Activated CD4-positive, alpha-beta T cell treated with anti-CD3 and anti-CD28 coated beads for 36 hours (primary cell): ENCODE measurements at regions of chr1 and their contacts with region 1.

Region 1: GRCh38 chr1:35030756-35031446 is 844 bp downstream of the ZMYM6 start:
- DNase-seq: peak; percentile 63
- ATAC-seq: peak; percentile 70
- H3K4me3 Mint-ChIP-seq: peak overlapping the region; percentile 92
- H3K27ac Mint-ChIP-seq: peak overlapping the region; percentile 92
- H3K4me1 Mint-ChIP-seq: peaks cover 33% of the 10 kb centered on the region
- H3K27me3 Mint-ChIP-seq: no peaks in the 10 kb centered on the region

Region 2: GRCh38 chr1:33430692-33431593 is 1600.0 kb before region 1 on chr1 and contains the start of gene PHC2:
- CTCF ChIA-PET with region 1: no interaction called
- POLR2A ChIA-PET with region 1: no interaction called
- intact Hi-C with region 1: loop called in 1 of 2 experiments (anchors 5 kb)
- DNase-seq: peak; percentile 95
- ATAC-seq: peak; percentile 99
- H3K4me3 Mint-ChIP-seq: peak within 1 kb of the TSS; percentile 58
- H3K27ac Mint-ChIP-seq: no peak within 1 kb of the TSS
- H3K4me1 Mint-ChIP-seq: peaks cover 5% of the 10 kb centered on the region
- H3K27me3 Mint-ChIP-seq: peaks cover 5% of the 10 kb centered on the region
- total RNA-seq, gene PHC2: 23.8 to 28.4 TPM

Region 3: GRCh38 chr1:34984793-34985608 is 45.9 kb before region 1 on chr1 and contains the start of gene TMEM35B:
- CTCF ChIA-PET with region 1: interaction called, 3 read pairs
- POLR2A ChIA-PET with region 1: interaction called, 3 read pairs
- intact Hi-C with region 1: loop called (anchors 1 to 5 kb)
- DNase-seq: peak; percentile 88
- ATAC-seq: peak; percentile 94
- H3K4me3 Mint-ChIP-seq: peak within 1 kb of the TSS; percentile 93
- H3K27ac Mint-ChIP-seq: peak within 1 kb of the TSS; percentile 93
- H3K4me1 Mint-ChIP-seq: peaks cover 43% of the 10 kb centered on the region
- H3K27me3 Mint-ChIP-seq: no peaks in the 10 kb centered on the region
- total RNA-seq, gene TMEM35B: 15.8 to 19.0 TPM

Region 4: GRCh38 chr1:35180776-35181374 is 150.0 kb after region 1 on chr1:
- CTCF ChIA-PET with region 1: no interaction called
- POLR2A ChIA-PET with region 1: interaction called, 5 read pairs
- intact Hi-C with region 1: loop called in 1 of 2 experiments (anchors 5 kb)
- DNase-seq: peak; percentile 36
- ATAC-seq: peak; percentile 84
- H3K4me3 Mint-ChIP-seq: peak overlapping the region; percentile 7
- H3K27ac Mint-ChIP-seq: peak overlapping the region; percentile 68
- H3K4me1 Mint-ChIP-seq: peaks cover 76% of the 10 kb centered on the region
- H3K27me3 Mint-ChIP-seq: no peaks in the 10 kb centered on the region

Region 5: GRCh38 chr1:35882945-35883634 is 852.2 kb after region 1 on chr1 and contains the start of gene AGO1:
- CTCF ChIA-PET with region 1: no interaction called
- POLR2A ChIA-PET with region 1: no interaction called
- intact Hi-C with region 1: loop called in 1 of 2 experiments (anchors 5 kb)
- DNase-seq: peak; percentile 98
- ATAC-seq: peak; percentile 95
- H3K4me3 Mint-ChIP-seq: peak within 1 kb of the TSS; percentile 91
- H3K27ac Mint-ChIP-seq: peak within 1 kb of the TSS; percentile 73
- H3K4me1 Mint-ChIP-seq: peaks cover 46% of the 10 kb centered on the region
- H3K27me3 Mint-ChIP-seq: no peaks in the 10 kb centered on the region
- total RNA-seq, gene AGO1: 31.5 to 34.6 TPM